Activated T-helper 2 cell treated with anti-CD3 and anti-CD28 coated beads, Interferon-gamma antibody, Interleukin-2, Interleukin-4, amounts not matched to agents 10 μg/mL and 5 μg/mL and 100 μg/mL, durations not matched to agents 14 hours and 24 hours and 36 hours (primary cell): ENCODE measurements at regions of chr1 and their contacts with region 1.

Region 1: GRCh38 chr1:51192213-51192843 is 43.7 kb upstream of the RNF11 start:
- DNase-seq: peak; percentile 20
- H3K4me3 Mint-ChIP-seq: no peak overlapping the region
- H3K27ac Mint-ChIP-seq: no peak overlapping the region
- H3K4me1 Mint-ChIP-seq: peaks cover 2% of the 10 kb centered on the region
- H3K27me3 Mint-ChIP-seq: peaks cover 5% of the 10 kb centered on the region

Region 2: DNA sequence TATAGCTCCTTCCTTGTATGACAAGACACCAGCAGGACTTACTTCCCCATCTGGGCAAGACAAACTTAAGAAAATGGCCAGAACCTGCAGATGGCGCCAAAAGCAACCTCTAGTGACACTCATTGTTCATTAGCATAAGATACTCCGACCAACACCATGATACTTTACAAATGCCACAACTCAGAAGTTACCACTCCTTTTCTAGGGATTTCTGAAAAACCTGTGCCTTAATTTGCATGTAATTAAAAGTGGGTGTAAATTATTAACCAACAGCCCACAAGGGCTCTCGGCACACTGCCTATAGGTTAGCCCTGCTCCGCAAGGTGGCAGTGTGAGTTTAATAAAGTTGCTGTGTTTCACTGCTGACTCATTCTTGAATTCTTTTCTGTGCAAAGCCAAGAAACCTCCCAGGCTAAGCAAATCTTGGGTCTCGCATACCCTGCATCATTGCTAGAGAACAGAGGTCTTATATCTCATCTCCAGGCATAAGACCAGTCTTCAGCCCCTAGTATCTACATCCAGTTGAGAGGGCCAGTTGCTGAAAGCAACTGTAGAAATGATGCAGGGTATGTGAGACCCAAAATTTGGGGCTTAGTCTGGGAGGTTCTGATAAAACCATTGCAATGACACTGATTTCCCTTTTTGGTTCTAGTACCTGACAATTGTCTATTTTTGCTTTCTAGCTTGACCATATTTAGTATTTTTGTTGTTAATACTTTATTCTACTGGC is 318.7 kb before region 1 on chr1:
- intact Hi-C with region 1: loop called (anchors 1 kb)
- DNase-seq: peak; percentile 53
- H3K4me3 Mint-ChIP-seq: peak overlapping the region; percentile 27
- H3K27ac Mint-ChIP-seq: no peak overlapping the region
- H3K4me1 Mint-ChIP-seq: no peaks in the 10 kb centered on the region
- H3K27me3 Mint-ChIP-seq: no peaks in the 10 kb centered on the region

Region 3: DNA sequence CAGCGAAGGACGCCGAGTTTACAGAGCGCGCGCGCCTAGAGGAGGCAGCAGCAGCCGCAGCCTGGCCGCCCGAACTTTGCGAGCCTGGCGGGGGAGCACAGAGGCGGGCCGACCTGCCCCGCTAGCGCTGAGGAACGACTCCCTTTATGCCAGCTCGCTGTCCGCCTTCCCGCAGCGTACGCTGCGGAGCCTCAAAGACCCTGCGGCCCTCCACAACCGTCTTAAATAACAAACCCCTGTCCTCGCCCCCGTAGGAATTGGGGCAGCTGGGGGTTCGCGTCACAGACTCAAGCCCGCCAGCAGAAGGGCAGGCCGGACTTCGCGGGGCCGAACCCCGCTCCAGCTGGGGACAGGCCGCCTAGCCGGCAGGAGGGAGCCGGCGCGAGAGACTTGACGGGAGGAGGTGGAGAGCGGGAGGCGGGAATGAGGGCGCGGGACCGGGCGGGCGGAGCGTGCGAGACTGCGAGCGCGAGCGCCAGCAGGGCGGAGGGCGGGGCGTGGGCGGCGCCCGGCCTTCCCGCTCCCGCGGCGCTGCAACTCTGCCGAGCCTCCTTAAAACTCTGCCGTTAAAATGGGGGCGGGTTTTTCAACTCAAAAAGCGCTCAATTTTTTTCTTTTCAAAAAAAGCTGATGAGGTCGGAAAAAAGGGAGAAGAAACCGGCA is 224.0 kb before region 1 on chr1:
- intact Hi-C with region 1: loop called (anchors 10 kb)
- DNase-seq: peak; percentile 84
- H3K4me3 Mint-ChIP-seq: peak overlapping the region; percentile 95
- H3K27ac Mint-ChIP-seq: peak overlapping the region; percentile 96
- H3K4me1 Mint-ChIP-seq: peaks cover 23% of the 10 kb centered on the region
- H3K27me3 Mint-ChIP-seq: peaks cover 13% of the 10 kb centered on the region

Region 4: DNA sequence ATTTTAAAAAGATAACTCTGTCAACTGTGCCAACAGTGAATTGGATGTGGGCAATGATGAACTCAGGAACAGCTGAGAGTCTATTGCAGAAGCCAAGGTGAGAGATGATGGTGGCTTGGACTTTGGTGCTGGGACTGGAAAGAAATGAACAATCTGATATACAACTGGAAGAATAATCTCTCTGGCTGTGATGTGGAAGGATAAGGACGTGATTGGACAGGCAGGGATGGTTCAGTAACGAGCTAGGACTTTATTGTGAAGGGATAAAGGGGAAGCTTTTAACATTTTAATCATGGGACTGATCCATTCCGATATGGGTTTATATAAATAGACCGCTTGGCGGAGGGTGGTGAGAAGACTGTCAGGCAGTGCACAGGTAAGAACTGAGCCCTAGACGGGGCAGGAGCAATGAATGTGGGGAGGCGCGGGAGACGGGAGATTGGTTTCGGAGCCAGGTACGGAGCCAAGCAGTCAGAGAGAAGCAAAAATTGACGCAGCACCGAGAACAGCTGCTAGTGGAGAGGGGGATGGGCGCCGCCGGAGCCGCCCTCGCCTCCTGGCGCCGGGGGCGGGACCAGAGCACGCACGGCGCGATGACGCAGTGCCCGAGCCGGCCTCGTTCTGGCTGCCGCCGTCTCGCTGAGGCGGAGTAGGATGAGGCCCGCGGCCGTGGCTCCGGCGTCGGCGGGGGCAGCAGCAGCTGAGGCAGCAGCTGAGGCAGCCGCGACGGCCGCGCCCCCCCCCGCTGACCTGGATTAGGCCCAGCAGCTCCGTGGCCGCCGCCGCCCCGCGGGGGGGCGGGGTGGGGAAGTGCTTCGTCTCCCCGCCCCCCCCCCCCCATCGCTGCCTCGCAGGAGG is 43.6 kb after region 1 on chr1 and contains the start of gene RNF11:
- intact Hi-C with region 1: loop called (anchors 1 kb)
- DNase-seq: peak; percentile 90
- H3K4me3 Mint-ChIP-seq: peak within 1 kb of the TSS; percentile 93
- H3K27ac Mint-ChIP-seq: peak within 1 kb of the TSS; percentile 85
- H3K4me1 Mint-ChIP-seq: peaks cover 34% of the 10 kb centered on the region
- H3K27me3 Mint-ChIP-seq: no peaks in the 10 kb centered on the region
- total RNA-seq, gene RNF11: 64.8 and 65.6 TPM in 2 replicates